ENCODE measurements at regions of chr13 and their contacts with region 1.

Region 1: DNA sequence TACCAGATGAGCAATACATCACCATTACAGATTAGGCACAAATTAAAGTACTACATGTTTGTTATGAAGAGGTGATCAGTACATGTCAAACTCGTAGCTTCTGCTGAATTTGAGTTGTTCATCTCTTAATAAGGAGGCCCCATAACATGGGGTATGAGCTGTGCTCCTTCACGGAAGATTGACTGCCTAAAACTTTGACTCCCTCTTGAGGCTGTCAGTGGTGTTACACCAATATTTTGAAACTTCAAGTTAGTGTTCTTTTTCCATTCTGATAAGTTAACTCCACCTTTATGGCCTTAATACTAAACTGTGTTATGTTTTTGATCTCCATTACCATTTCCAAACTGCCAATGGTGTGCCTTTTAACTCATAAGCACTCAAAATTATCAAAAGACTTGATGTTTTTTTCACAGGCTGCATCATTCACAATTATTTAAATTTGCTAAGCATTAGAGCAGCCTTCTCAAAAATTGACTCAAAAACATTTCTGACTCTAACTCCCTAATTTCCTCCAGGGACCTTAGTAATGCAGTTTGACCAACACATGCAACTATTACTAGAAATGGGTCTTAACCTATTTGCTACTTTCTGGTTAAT is 1591.5 kb downstream of the PCDH9 start:
- DNase-seq: no peak
- ATAC-seq: peak; percentile 81
- H3K4me3 ChIP-seq: no peak overlapping the region
- H3K27ac ChIP-seq: no peak overlapping the region
- H3K4me1 ChIP-seq: no peaks in the 10 kb centered on the region
- H3K27me3 ChIP-seq: no peaks in the 10 kb centered on the region
- CTCF ChIP-seq: peak; percentile 51 to 76 (median 73)
- EP300 ChIP-seq: no peak
- POLR2A ChIP-seq: no peak
- RAD21 ChIP-seq: peak; percentile 75

Region 2: DNA sequence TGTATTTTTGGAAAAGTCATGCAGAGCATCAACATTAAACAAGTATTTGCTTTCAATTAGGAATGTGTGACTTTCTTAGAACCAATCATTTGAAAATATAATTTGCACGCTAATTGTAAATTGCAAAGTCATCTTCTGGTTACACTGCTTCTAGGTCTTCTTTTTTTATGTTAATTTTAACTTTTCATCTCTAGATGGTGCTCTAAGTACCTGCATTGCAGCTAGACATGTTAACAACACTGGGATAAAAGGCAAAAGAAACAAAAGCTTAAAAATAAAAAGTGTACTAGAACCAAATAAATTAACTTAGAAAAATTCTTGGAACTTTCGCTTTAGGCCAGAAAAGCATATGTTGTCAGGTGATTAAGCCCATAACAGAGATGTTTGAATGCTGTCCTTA is 1166.8 kb before region 1 on chr13:
- CTCF ChIA-PET with region 1: interaction called, 22 read pairs
- POLR2A ChIA-PET with region 1: no interaction called
- RAD21 ChIA-PET with region 1: interaction called, 14 read pairs
- SMC1A ChIA-PET with region 1: interaction called, 13 read pairs
- in situ Hi-C with region 1: no loop called
- intact Hi-C with region 1: loop called (anchors 5 kb)
- DNase-seq: no peak
- ATAC-seq: peak; percentile 56; the same call in 2 of the 3 replicates
- H3K4me3 ChIP-seq: no peak overlapping the region
- H3K27ac ChIP-seq: no peak overlapping the region
- H3K4me1 ChIP-seq: no peaks in the 10 kb centered on the region
- H3K27me3 ChIP-seq: no peaks in the 10 kb centered on the region
- CTCF ChIP-seq: no peak; a peak in 1 of 6 replicates
- EP300 ChIP-seq: no peak
- POLR2A ChIP-seq: no peak
- RAD21 ChIP-seq: 0 out of 2 replicates have a peak, but pooled peaks have one; percentile 22

Region 3: DNA sequence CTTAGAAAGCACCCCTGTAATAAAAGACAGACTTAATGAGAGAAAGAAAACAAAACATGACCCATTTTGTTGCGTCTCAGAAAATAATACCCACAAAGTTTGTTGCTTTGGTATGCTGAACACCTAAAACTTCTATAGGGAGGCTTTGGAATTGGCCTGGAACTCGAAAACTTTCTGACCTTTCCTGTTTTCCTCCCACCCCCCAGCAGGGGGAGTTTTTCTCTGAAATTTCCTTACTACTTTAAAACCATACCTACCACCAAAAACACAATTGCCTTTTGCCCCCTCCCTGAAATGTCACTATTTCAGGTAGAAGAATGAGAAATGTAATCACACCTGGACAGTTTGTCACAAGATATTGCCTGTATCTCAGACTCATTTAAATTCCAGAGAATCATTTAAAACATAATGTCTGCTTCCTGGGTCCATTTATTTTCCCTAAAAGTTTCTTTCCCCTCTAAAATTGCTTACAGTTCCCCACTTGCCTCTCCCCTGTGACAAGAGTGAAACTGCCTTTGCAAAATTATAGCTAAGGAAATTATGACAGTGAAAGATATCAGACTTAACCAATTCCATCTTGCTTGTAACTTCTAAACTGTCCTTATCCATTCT is 1108.7 kb before region 1 on chr13:
- CTCF ChIA-PET with region 1: interaction called, 13 read pairs
- POLR2A ChIA-PET with region 1: no interaction called
- RAD21 ChIA-PET with region 1: interaction called, 5 read pairs
- SMC1A ChIA-PET with region 1: interaction called, 6 read pairs
- in situ Hi-C with region 1: no loop called
- intact Hi-C with region 1: loop called (anchors 2 kb)
- DNase-seq: no peak
- ATAC-seq: no peak
- H3K4me3 ChIP-seq: no peak overlapping the region
- H3K27ac ChIP-seq: no peak overlapping the region
- H3K4me1 ChIP-seq: no peaks in the 10 kb centered on the region
- H3K27me3 ChIP-seq: no peaks in the 10 kb centered on the region
- CTCF ChIP-seq: peak; percentile 40 to 62 (median 50)
- EP300 ChIP-seq: no peak
- POLR2A ChIP-seq: no peak
- RAD21 ChIP-seq: 0 out of 2 replicates have a peak, but pooled peaks have one; percentile 5

Region 4: GRCh38 chr13:64819081-64819480 is 819.6 kb before region 1 on chr13:
- CTCF ChIA-PET with region 1: interaction called, 13 read pairs
- POLR2A ChIA-PET with region 1: no interaction called
- RAD21 ChIA-PET with region 1: interaction called, 5 read pairs
- SMC1A ChIA-PET with region 1: interaction called, 8 read pairs
- in situ Hi-C with region 1: no loop called
- intact Hi-C with region 1: loop called (anchors 5 kb)
- DNase-seq: no peak
- ATAC-seq: no peak
- H3K4me3 ChIP-seq: no peak overlapping the region
- H3K27ac ChIP-seq: no peak overlapping the region
- H3K4me1 ChIP-seq: no peaks in the 10 kb centered on the region
- H3K27me3 ChIP-seq: no peaks in the 10 kb centered on the region
- CTCF ChIP-seq: no peak; a peak in 1 of 6 replicates
- EP300 ChIP-seq: no peak
- POLR2A ChIP-seq: no peak
- RAD21 ChIP-seq: no peak

Region 5: GRCh38 chr13:65600702-65601101 is 38.0 kb before region 1 on chr13:
- CTCF ChIA-PET with region 1: no interaction called
- POLR2A ChIA-PET with region 1: no interaction called
- RAD21 ChIA-PET with region 1: no interaction called
- SMC1A ChIA-PET with region 1: no interaction called
- in situ Hi-C with region 1: no loop called
- intact Hi-C with region 1: no loop called
- DNase-seq: no peak
- ATAC-seq: no peak
- H3K4me3 ChIP-seq: no peak overlapping the region
- H3K27ac ChIP-seq: no peak overlapping the region
- H3K4me1 ChIP-seq: no peaks in the 10 kb centered on the region
- H3K27me3 ChIP-seq: no peaks in the 10 kb centered on the region
- CTCF ChIP-seq: no peak
- EP300 ChIP-seq: no peak
- POLR2A ChIP-seq: no peak
- RAD21 ChIP-seq: no peak

Measured in GM12878 (cell line).